CD14-positive monocyte (primary cell): ENCODE measurements at regions of chr17 and their contacts with region 1.

Region 1: DNA sequence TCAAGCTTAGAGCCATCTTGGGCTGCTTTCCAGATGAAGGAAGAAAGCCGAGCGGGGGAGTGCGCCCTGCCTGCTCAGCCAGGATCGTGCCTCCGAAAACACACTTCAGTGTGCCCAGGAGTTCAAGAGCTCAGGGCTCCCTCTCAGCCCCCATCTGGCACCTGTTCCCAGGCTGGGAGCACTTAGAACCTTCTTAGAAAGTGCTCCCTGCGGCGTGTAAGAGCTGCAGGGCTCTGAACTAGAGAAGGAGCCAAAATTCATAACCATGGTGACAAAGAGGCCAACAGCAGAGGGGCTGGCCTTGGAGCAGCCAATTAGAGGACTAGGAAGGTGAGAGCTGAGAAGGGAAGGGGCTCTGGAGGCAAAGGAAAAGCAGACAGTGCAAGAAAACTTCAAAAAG is 59.0 kb upstream of the TNRC6C start:
- DNase-seq: no peak
- H3K4me3 ChIP-seq: no peak overlapping the region
- H3K4me3 Mint-ChIP-seq: peak overlapping the region in 1 of 2 donors; percentile 54
- H3K27ac ChIP-seq: no peak overlapping the region
- H3K27ac Mint-ChIP-seq: no peak overlapping the region
- H3K4me1 ChIP-seq: no peaks in the 10 kb centered on the region
- H3K4me1 Mint-ChIP-seq: peaks cover 5% of the 10 kb centered on the region
- H3K27me3 ChIP-seq: peaks cover 0 to 58% of the 10 kb centered on the region in 2 donors
- H3K27me3 Mint-ChIP-seq: peaks cover 27 to 56% (median 43%) of the 10 kb centered on the region in 3 donors
- CTCF ChIP-seq: no peak

Region 2: GRCh38 chr17:77852666-77853207 is 46.8 kb before region 1 on chr17:
- intact Hi-C with region 1: loop called in 1 of 2 experiments (anchors 5 kb)
- DNase-seq: no peak
- H3K4me3 ChIP-seq: no peak overlapping the region
- H3K4me3 Mint-ChIP-seq: no peak overlapping the region
- H3K27ac ChIP-seq: no peak overlapping the region
- H3K27ac Mint-ChIP-seq: no peak overlapping the region
- H3K4me1 ChIP-seq: no peaks in the 10 kb centered on the region
- H3K4me1 Mint-ChIP-seq: no peaks in the 10 kb centered on the region
- H3K27me3 ChIP-seq: peaks cover 0 to 11% of the 10 kb centered on the region in 2 donors
- H3K27me3 Mint-ChIP-seq: peaks cover 2 to 11% (median 7%) of the 10 kb centered on the region in 3 donors
- CTCF ChIP-seq: no peak

Region 3: DNA sequence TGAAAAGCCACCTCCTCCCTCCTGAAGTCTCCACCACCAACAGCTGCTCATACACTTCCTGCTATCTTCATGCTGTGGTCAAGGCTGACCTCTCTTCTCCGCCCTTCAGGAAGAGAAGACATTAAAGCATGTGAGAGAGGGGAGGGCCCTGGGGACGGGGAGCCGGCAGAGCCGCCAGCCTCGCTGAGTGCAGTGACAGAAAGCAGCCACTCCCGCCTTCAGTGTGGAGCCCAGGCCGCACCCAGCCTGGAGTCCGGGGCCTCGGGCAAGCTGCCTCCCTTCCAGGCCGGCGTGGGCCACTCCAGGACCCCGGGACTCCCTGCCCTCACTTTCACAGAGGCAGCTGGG is 35.7 kb before region 1 on chr17:
- intact Hi-C with region 1: loop called in 1 of 2 experiments (anchors 5 kb)
- DNase-seq: peak; percentile 36 to 56 (median 49)
- H3K4me3 ChIP-seq: peak overlapping the region in 1 of 3 experiments; percentile 22
- H3K4me3 Mint-ChIP-seq: peak overlapping the region in 1 of 2 donors; percentile 30
- H3K27ac ChIP-seq: no peak overlapping the region
- H3K27ac Mint-ChIP-seq: peak overlapping the region in 5 of 7 donors; percentile 35 to 78 (median 50)
- H3K4me1 ChIP-seq: peaks cover 36 to 39% of the 10 kb centered on the region in 2 donors
- H3K4me1 Mint-ChIP-seq: peaks cover 33% of the 10 kb centered on the region
- H3K27me3 ChIP-seq: peaks cover 0 to 16% of the 10 kb centered on the region in 2 donors
- H3K27me3 Mint-ChIP-seq: peaks cover 17 to 27% (median 25%) of the 10 kb centered on the region in 3 donors
- CTCF ChIP-seq: no peak

Region 4: DNA sequence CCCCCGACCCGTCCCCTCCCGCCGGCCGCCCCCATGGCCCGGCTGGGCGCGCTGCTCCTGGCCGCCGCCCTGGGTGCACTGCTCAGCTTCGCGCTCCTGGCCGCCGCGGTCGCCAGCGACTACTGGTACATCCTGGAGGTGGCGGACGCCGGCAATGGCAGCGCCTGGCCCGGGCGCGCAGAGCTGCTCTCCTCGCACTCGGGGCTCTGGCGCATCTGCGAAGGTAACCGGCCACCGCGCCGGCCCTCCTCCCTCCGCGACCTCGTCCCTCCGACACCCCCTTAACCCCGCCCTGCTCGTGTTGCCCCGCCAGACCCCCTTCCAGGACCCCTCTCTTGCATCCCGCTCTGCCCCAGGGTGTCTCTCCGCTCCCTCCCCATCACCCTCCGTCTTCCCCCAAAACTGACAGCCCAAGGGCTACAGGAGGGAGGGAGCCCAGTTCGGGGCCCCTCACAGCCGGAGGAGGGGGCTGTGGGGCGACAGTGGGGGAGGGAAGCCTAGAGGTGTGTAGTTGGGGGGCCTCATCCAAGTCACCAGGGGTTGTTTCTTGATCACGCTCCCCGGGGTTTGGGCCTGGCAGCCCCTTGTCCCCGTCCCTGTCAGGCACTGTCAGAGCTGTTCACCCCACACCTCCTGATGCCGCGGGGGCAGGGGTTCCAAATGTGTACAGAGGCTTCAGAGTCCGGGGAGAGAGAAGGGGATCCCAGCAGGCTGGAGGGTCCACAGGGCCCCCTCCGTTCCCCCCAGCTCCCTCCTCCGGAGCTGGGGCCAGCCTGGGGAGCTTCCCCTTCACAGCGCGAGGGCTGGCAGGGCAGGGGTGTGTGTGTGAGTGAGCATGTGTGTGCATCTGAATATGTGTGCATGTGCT is 332.7 kb after region 1 on chr17:
- intact Hi-C with region 1: no loop called
- DNase-seq: no peak
- H3K4me3 ChIP-seq: no peak overlapping the region
- H3K4me3 Mint-ChIP-seq: peak overlapping the region; percentile 37 to 72
- H3K27ac ChIP-seq: no peak overlapping the region
- H3K27ac Mint-ChIP-seq: no peak overlapping the region
- H3K4me1 ChIP-seq: peaks cover 3 to 11% of the 10 kb centered on the region in 2 donors
- H3K4me1 Mint-ChIP-seq: peaks cover 11% of the 10 kb centered on the region
- H3K27me3 ChIP-seq: peaks cover 15 to 41% of the 10 kb centered on the region in 2 donors
- H3K27me3 Mint-ChIP-seq: peaks cover 52 to 69% (median 60%) of the 10 kb centered on the region in 3 donors
- CTCF ChIP-seq: no peak